ENCODE measurements at regions of chr7 and their contacts with region 1.

Region 1: DNA sequence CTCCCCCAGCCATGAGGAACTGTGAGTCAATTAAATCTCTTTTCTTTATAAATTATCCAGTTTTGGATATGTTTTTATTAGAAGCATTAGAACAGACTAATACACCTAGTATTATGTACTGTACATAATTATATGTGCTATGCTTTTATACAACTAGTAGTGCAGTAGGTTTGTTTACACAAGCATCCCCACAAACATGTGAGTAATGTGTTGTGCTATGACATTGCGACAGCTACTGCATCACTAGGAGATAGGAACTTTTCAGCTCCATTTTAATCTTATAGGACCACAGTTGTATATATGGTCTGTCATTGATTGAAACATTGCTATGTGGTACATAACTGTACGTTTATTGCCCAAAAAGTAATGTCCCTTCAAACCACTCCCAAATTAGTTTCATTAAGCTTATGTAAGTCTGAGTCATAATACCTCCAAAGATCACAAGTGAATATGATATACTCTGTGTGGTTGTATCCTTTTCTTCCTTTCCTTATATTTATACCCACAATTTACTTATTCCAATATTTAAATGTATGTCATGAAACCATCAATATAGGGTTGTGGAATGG is 183.2 kb upstream of the POT1 start:
- DNase-seq: no peak
- H3K4me3 ChIP-seq: no peak overlapping the region
- H3K27ac ChIP-seq: no peak overlapping the region
- H3K4me1 ChIP-seq: no peaks in the 10 kb centered on the region
- H3K27me3 ChIP-seq: no peaks in the 10 kb centered on the region
- CTCF ChIP-seq: no peak

Region 2: DNA sequence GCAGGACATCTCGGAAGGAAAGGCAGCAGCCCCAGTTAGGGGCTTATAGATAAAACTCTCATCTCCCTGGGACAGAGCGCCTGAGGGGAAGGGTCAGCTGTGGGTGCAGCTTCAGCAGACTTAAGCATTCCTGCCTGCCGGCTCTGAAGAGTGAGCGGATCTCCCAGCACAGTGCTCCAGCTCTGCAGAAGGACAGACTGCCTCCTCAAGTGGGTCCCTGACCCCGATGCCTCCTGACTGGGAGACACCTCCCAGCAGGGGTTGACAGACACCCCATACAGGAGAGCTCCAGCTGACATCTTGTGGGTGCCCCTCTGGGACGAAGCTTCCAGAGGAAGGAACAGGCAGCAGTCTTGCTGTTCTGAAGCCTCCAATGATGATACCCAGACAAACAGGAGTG is 66.1 kb before region 1 on chr7:
- dilution Hi-C with region 1: no loop called
- DNase-seq: no peak
- H3K4me3 ChIP-seq: no peak overlapping the region
- H3K27ac ChIP-seq: no peak overlapping the region
- H3K4me1 ChIP-seq: no peaks in the 10 kb centered on the region
- H3K27me3 ChIP-seq: no peaks in the 10 kb centered on the region
- CTCF ChIP-seq: no peak

Region 3: GRCh38 chr7:125154930-125155329 is 42.1 kb after region 1 on chr7:
- dilution Hi-C with region 1: loop called (anchors 5 kb)
- DNase-seq: no peak
- H3K4me3 ChIP-seq: no peak overlapping the region
- H3K27ac ChIP-seq: no peak overlapping the region
- H3K4me1 ChIP-seq: no peaks in the 10 kb centered on the region
- H3K27me3 ChIP-seq: no peaks in the 10 kb centered on the region
- CTCF ChIP-seq: no peak